Prostate gland (tissue), 2 donors: ENCODE measurements at regions of chr15 and their contacts with region 1.

Region 1: DNA sequence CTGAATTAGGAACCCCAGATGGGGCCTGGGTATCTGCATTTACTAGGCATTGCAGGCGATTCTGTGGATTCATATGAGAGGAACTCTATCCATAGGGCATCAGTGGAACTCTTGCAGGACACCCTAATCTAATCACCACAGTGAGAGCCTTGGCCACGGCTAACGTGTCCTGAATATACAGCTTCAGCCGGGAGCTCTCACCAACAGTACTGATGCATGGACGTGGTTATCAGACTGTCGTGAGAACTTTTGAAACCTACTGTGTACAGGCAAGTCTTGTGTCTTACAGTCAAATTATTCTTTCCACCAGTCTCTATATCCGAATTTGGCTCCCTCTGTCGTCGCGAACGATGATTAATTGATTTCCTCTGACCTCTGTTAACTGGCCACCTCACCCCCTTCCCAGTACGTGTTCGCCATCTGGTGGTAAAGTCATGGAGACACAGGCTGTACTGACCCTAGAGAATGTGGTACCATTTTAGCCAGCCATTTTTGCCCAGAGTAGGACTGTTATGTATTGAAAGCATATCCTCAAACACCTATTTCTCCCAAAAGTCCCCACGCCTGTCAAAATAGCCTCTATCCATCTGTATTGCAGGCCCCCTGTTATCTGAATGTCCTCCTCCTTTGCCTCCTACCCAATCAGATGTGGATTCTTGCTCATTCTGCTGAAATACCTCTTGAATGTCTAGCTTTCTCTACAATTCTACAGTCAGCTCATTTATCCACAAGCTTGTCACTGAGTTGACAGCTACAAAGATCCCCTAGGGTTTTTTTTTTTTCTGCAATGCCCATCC is 39.7 kb downstream of the GLDN start:
- DNase-seq: peak; percentile 15
- H3K4me3 ChIP-seq: no peak overlapping the region
- H3K27ac ChIP-seq: no peak overlapping the region
- H3K4me1 ChIP-seq: no peaks in the 10 kb centered on the region
- H3K27me3 ChIP-seq: no peaks in the 10 kb centered on the region
- CTCF ChIP-seq: peak; percentile 35 to 85 (median 76)
- POLR2A ChIP-seq: no peak

Region 2: GRCh38 chr15:51162865-51163762 is 218.1 kb before region 1 on chr15:
- intact Hi-C with region 1: loop called (anchors 5 kb)
- DNase-seq: peak; percentile 65
- H3K4me3 ChIP-seq: no peak overlapping the region
- H3K27ac ChIP-seq: peak overlapping the region in 1 of 2 donors; percentile 4
- H3K4me1 ChIP-seq: no peaks in the 10 kb centered on the region
- H3K27me3 ChIP-seq: no peaks in the 10 kb centered on the region
- CTCF ChIP-seq: peak; percentile 84 to 93 (median 86)
- POLR2A ChIP-seq: no peak

Region 3: DNA sequence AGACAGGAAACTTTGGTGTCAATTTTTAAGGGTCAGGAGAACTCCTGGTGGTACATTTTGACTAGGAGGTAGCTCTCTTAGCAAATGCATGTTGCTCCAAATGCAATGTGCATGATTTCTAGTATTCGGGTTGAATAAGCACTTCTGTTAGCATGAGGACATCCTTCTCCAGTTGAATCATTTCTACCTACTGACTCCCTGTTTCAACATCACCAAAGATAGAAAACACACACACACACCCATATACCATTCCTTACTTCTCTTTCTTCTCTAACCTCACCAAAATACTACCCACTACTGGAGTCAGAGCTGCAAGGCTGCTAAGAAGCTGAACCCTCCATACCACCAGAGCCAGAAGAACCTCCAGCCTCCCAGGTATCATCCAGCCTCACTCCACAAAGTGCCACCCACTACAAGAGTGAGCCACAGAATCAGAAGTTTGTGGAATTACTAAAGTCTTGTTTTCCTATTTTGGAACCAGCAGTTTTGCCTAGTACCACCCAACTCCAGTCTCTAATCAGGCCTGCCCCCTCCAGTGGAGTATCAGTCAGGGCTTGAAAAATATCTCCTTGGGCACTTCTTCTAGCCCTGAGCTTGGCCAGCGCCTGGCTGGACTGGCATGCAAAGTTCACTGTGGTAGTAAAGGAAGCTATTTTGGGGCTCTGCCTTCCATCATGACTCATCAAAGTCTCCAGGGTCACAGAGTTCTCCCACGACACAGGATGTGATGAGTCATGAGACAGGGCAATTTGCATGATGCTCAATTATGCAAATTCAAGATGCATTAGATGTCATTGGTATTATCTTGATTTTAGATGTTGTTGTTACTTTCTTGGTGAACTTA is 153.0 kb before region 1 on chr15:
- intact Hi-C with region 1: loop called (anchors 5 kb)
- DNase-seq: no peak
- H3K4me3 ChIP-seq: no peak overlapping the region
- H3K27ac ChIP-seq: no peak overlapping the region
- H3K4me1 ChIP-seq: no peaks in the 10 kb centered on the region
- H3K27me3 ChIP-seq: no peaks in the 10 kb centered on the region
- CTCF ChIP-seq: no peak
- POLR2A ChIP-seq: no peak

Region 4: GRCh38 chr15:51282239-51282880 is 98.8 kb before region 1 on chr15:
- intact Hi-C with region 1: loop called (anchors 2 kb)
- DNase-seq: no peak
- H3K4me3 ChIP-seq: no peak overlapping the region
- H3K27ac ChIP-seq: no peak overlapping the region
- H3K4me1 ChIP-seq: no peaks in the 10 kb centered on the region
- H3K27me3 ChIP-seq: no peaks in the 10 kb centered on the region
- CTCF ChIP-seq: no peak
- POLR2A ChIP-seq: no peak

Region 5: GRCh38 chr15:51312166-51313097 is 68.8 kb before region 1 on chr15:
- intact Hi-C with region 1: no loop called
- DNase-seq: no peak
- H3K4me3 ChIP-seq: no peak overlapping the region
- H3K27ac ChIP-seq: no peak overlapping the region
- H3K4me1 ChIP-seq: no peaks in the 10 kb centered on the region
- H3K27me3 ChIP-seq: no peaks in the 10 kb centered on the region
- CTCF ChIP-seq: no peak
- POLR2A ChIP-seq: no peak